ENCODE measurements at regions of chr16 and their contacts with region 1.

Region 1: DNA sequence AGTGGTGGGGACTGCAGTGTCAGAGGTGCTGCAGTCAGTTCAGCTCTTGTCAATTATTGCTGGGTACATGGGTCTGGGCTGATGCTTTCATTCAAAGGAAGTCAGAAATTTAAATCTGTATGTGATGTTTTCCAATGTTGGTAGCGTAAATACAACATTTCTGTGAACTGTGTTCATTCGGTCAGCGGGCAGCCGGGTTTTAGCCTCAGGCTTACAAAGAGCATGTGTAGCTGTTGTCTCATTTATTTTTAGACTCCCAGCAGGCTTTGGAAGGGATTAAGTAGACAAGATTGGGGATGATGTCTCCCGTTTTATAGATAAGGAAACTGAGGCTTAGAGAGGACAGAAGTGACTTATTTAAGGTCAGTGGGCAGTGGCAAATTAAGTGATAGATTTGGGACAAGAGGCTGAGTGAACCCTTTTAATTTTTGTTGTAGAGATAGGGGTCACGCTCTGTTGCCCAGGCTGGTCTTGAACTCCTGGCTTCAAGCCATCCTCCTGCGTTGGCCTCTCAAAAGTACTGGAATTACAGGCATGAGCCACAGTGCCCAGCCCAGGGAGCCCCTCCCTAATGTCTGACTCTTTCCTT is 8.1 kb downstream of the AQP8 start:
- DNase-seq: no peak
- ATAC-seq: no peak

Region 2: DNA sequence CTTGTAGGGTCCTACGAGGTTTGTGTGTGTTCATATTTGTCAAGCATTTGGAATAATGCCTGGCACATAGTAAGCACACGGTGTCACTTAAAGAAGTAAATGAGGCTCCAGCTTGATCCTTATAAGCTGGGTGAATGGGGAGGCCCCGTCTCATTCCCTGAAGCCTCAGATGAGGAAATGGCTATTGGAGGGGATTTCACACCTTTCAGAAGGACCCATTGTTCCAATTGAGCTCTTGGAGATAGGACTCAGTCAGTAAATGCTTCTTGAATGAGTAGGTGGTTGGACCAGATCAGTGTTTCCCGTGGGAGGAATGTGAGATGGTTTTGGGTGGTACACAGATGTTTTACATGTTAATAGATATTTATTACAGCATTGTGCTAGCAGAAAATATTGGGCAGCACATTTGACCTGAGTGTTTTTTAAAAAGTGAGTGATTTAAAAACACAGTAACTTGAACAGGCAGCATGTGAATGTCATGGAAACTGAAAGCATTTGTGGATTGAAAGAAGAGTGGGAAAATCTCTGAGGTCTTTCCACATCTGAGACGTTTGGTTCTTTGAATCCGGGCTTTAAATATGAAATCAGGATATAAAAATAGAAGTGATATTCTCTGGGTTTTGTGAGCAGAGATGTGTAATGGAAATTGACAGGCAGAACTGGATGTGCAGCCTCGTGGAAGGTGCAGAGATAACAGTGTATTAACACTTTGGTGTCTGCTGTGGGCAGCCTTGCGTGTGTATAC is 173.2 kb before region 1 on chr16:
- intact Hi-C with region 1: loop called (anchors 5 to 10 kb)
- DNase-seq: no peak
- ATAC-seq: no peak

Region 3: DNA sequence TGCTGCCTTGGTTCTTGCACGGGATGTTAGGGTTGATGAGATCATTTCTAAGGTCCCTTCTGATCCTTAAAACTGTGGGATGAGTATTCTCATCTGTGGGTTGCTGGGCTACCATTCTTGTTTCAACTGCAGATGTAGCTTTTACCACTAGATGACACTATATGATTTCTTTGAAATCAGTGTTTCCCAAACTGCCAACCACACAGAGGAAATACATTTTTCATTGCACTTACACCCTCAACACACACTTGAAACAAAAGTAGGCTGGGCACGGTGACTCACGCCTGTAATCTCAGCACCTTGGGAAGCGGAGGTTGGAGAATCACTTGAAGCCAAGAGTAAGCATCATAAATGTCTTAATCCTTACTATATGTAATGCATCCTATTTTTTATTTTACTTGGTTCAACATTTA is 98.0 kb before region 1 on chr16:
- intact Hi-C with region 1: loop called (anchors 10 kb)
- DNase-seq: peak; percentile 60 to 78
- ATAC-seq: peak; percentile 96

Measured in left colon (tissue), 2 donors.